ENCODE measurements at regions of chr1 and their contacts with region 1.

Region 1: GRCh38 chr1:38990738-38991639 is at the start of gene AKIRIN1:
- DNase-seq: peak; percentile 100
- total RNA-seq, gene AKIRIN1: 60.0 TPM

Region 2: GRCh38 chr1:38875806-38876205 is 115.2 kb before region 1 on chr1:
- intact Hi-C with region 1: loop called (anchors 2 kb)
- DNase-seq: no peak

Region 3: DNA sequence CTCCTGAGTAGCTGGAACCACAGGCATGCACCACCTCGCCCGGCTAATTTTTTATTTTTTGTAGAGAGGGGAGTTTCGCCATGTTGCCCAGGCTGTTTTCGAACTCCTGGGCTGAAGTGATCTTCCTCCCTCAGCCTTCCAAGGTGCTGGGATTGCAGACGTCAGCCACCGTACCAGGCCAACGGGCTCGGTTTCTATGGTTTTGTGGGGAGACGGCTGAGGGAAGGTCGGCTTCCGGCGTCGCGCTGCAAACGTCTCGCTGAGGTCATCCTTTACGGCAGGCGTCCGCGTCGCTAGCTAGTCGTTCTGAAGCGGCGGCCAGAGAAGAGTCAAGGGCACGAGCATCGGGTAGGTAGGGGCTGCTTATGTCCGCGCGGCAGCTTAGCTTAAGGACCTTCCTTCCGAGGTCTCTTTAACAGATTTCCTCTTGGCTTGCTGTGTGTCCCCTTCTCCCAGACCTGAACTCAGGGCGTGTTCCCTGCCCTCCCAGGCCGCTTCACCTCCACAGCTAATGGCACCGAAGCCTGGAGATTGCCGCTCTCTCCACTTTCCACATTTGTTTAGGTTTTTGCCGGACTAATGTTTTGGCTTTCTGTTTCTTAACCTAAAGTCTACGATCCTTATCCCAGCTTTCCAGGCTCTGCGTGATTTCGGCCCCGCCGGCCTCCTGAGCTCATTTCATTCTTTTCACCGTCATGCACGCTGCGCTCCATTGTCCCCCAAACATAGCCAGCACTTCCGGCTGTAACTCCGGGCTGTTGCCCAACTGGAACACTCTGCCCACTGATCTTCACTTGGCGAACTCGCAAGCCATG is 35.3 kb after region 1 on chr1 and contains the start of gene NDUFS5:
- intact Hi-C with region 1: loop called (anchors 2 kb)
- DNase-seq: peak; percentile 94
- total RNA-seq, gene NDUFS5: 519 TPM

Measured in cardiac septum (tissue), 1 donor.